ENCODE measurements at regions of chr2 and their contacts with region 1.

Region 1: GRCh38 chr2:38602732-38603401 is at the start of gene HNRNPLL:
- DNase-seq: peak; percentile 91 to 94 (median 94)
- H3K4me3 ChIP-seq: peak within 1 kb of the TSS; percentile 73 to 92 (median 83)
- H3K27ac ChIP-seq: peak within 1 kb of the TSS; percentile 50 to 83
- H3K4me1 ChIP-seq: peaks cover 19 to 33% (median 25%) of the 10 kb centered on the region in 4 experiments
- H3K27me3 ChIP-seq: peaks cover 0 to 14% (median 4%) of the 10 kb centered on the region in 5 experiments

Region 2: DNA sequence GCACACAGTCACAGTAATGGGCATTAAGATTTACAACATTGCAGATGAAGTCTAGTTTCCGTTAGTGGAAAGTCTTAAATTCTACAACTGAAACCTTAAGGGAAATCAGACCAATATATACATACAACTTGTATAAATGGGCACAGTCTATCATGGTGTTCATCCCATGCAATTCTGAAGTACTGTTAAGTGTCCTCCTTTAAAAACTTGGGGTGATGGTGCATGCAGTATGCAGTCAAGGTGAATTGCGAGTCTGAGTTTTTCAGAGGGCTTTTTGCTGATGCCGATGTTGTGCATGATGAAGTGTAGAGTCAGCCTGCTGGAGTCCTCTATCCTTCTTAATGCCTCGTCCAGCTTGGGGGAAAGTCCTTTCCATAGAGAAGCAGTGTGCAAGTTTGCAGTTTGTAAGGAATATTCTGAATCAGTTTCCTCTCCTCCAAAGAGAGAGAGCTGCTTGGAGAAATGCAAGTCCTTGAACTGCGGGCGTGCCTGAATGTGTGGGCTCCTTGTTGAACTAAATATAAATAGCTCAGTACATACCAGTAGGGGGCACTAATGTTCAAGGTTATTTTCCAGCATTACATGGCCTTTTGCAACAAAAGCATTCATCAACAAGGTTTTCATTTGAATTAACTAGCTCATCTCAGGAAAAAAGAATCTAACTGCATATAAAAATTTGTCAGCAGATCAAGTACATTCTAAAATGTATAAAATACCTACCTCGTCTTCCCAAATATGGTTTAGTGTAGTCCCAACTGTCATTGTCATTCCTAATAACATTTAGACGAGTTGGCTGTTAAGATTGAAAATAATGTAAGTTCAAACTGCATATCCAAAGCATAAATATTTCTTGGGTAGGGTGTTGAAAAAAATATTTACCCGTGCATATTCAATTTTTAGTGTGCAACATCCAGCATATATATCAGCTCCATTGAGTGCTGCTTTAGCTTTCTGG is 21.4 kb before region 1 on chr2:
- CTCF ChIA-PET with region 1: interaction called, 44 read pairs
- POLR2A ChIA-PET with region 1: no interaction called
- DNase-seq: peak; percentile 79 to 91 (median 85)
- H3K4me3 ChIP-seq: no peak overlapping the region
- H3K27ac ChIP-seq: no peak overlapping the region
- H3K4me1 ChIP-seq: peaks cover 0 to 3% (median 0%) of the 10 kb centered on the region in 4 experiments
- H3K27me3 ChIP-seq: no peaks in the 10 kb centered on the region

Region 3: DNA sequence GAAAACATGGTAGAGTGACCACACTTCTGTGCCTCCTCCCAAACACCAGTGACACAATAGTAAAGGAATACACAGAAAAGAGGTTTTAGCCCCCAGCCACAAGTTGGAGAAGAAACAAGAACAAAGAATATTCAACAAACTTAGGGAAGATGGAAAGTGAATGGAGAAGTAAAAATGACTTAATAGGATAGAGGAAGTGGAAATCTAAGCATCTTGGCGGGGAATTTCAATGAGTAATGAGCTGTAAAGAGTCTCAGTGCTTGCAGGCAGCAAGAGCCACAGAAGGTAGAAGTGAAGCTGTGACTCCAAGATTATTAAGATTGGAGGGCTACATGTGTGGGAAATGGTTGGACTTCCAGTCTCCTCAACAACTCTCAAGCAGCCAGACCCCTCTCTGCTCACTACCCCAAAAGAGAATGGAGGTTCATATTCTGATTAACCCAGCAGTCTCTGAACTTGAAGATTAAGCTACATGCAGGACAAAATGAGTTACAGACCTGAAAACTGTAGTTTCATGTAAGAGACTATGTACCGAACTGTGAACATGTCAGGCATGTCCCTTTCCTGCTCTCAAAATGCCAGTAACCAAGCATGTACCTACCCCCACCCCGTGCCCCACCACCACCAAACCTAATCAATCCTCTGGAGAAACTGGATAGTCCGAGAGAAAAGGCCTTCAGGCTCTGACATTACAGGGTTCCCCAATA is 16.7 kb after region 1 on chr2:
- CTCF ChIA-PET with region 1: interaction called, 11 read pairs
- POLR2A ChIA-PET with region 1: interaction called, 3 read pairs
- DNase-seq: peak in 2 of 3 donors; percentile 74 to 82
- H3K4me3 ChIP-seq: no peak overlapping the region
- H3K27ac ChIP-seq: no peak overlapping the region
- H3K4me1 ChIP-seq: peaks cover 8 to 36% (median 16%) of the 10 kb centered on the region in 4 experiments
- H3K27me3 ChIP-seq: peaks cover 0 to 16% (median 0%) of the 10 kb centered on the region in 5 experiments

Region 4: GRCh38 chr2:38665854-38666555 is 63.1 kb after region 1 on chr2 and contains the start of gene GALM:
- CTCF ChIA-PET with region 1: interaction called, 14 read pairs
- POLR2A ChIA-PET with region 1: interaction called, 7 read pairs
- DNase-seq: peak; percentile 59 to 81 (median 73)
- H3K4me3 ChIP-seq: peak within 1 kb of the TSS; percentile 35 to 89 (median 66)
- H3K27ac ChIP-seq: peak within 1 kb of the TSS in 1 of 2 experiments; percentile 37
- H3K4me1 ChIP-seq: peaks cover 8 to 21% (median 17%) of the 10 kb centered on the region in 4 experiments
- H3K27me3 ChIP-seq: no peaks in the 10 kb centered on the region

Region 5: DNA sequence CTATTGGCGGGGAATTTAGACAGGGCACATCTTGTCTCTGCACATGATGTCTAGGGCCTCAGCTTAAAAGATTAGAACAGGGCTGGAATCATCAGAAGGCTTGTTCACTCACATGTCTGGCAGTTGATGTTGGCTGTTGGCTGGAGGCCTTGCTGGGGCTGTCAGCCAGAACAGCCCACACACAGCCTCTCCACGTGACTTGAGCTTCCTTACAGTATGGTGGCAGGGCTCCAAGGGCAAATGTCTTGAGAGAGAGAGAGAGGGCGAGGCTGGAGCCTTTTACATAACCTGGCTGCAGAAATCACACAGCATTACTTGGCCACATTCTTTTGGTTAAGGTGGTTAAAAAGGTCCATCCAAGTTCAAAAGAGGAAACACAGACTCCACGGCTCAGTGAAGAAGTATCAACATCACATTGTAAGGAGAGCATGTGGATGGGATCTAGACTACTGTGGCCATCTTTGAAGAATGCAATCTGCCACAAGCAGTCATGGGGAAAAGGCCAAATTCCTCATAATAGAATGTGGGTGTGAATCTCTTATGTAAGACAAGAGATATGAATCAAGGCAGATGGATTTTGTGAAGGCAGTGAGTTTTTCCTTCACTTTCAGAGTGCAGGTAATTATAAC is 117.9 kb after region 1 on chr2:
- CTCF ChIA-PET with region 1: interaction called, 80 read pairs
- POLR2A ChIA-PET with region 1: no interaction called
- DNase-seq: peak in 2 of 3 donors; percentile 41 to 53
- H3K4me3 ChIP-seq: no peak overlapping the region
- H3K27ac ChIP-seq: no peak overlapping the region
- H3K4me1 ChIP-seq: peaks cover 7 to 24% (median 16%) of the 10 kb centered on the region in 4 experiments
- H3K27me3 ChIP-seq: no peaks in the 10 kb centered on the region

Region 6: DNA sequence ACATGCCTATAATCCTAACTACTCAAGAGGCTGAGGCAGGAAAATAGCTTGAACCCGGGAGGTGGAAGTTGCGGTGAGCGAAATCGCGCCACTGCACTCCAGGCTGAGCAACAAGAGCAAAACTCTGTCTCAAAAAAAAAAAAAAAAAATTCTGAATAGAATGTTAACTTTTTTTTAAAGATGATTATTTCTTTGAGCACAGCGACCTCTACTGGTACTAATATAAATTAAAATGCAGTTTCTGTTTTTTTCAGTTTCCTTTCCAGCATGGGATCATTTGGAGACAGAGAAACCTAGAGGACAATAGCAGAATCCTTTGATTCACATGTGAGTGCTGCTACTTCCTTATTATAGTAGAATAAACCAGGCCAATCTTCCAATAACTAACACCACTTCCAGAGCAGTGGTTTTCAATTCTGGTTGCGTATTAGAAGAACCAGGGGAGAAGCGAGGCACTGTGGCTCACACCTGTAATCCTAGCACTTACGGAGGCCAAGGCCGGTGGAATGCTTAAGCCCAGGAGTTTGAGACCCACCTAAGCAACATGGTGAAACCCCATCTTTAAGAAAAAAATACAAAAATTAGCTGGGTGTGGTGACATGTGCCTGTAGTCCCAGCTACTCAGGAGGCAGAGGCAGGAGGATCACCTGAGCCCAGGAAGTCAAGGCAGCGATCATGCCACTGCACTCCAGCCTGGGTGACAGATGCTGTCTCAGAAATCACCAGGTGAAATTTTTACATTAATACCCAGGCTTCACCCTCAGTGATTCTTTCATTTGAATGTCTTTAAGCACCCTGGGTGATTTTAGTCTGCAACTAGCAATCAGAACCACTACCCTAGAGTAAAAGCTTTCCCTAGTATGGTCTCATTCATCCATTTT is 138.2 kb after region 1 on chr2:
- CTCF ChIA-PET with region 1: interaction called, 30 read pairs
- POLR2A ChIA-PET with region 1: no interaction called
- DNase-seq: peak; percentile 67 to 85 (median 82)
- H3K4me3 ChIP-seq: no peak overlapping the region
- H3K27ac ChIP-seq: no peak overlapping the region
- H3K4me1 ChIP-seq: peaks cover 0 to 4% (median 1%) of the 10 kb centered on the region in 4 experiments
- H3K27me3 ChIP-seq: no peaks in the 10 kb centered on the region

Region 7: DNA sequence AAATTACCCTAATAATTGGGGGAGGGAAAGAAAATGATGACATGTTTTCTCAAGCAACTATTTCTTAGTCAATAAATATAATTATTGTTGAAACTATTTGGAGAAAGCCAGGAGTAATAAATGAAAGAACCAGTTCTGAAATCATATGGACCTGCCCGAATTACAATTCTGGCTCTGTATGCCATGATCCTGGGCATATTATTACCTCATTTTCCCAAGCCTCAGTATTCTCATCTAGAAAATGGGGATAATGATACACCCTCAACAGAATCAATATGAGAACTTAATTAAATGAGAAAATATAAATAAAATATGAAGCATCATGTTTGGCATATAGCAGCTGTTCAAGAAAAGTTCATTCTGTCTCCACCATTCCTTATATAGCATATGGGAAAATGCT is 309.8 kb after region 1 on chr2:
- CTCF ChIA-PET with region 1: no interaction called
- POLR2A ChIA-PET with region 1: no interaction called
- DNase-seq: no peak
- H3K4me3 ChIP-seq: no peak overlapping the region
- H3K27ac ChIP-seq: no peak overlapping the region
- H3K4me1 ChIP-seq: peaks cover 0 to 2% (median 0%) of the 10 kb centered on the region in 4 experiments
- H3K27me3 ChIP-seq: no peaks in the 10 kb centered on the region

Measured in common myeloid progenitor, CD34-positive (primary cell).